Natural killer cell (primary cell): ENCODE measurements at regions of chr1 and their contacts with region 1.

Region 1: DNA sequence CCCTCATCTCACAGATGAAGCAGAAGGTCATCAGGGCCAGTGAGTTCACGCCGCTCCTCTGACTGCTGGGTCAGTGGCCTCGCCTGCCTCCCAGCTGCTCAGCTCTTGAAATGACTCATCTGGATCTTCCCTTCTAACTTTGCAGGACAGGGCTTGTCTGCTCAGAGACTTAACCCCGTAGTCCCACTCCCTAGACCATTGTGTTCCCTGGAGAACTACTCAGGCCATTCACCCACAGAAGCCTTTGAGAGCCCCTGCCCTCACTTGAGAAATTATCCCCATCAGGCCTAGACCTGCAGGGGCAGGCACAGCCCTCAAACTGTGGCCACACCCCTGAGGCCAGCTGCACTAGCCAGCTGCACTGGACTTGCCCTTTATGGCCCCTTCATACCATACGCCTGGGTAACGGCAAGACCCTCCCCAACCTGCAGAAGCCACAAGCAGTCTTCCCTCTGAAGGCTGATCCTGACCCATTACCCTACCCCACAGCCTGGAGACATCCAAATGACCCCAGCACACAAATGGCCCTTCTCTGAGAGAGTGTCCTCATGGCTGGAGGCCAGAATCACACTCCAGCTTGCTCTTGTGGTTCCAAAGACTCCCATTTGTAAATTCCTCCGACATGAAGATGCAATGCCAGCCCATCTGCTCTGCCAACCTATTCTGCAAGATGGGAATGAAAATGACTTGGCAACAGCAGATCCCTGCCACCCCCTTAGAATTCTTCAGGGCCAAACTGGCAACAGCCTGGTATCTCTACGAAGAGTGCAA is 33.2 kb downstream of the RCSD1 start:
- DNase-seq: no peak
- ATAC-seq: no peak
- H3K4me3 ChIP-seq: no peak overlapping the region
- H3K4me3 Mint-ChIP-seq: no peak overlapping the region
- H3K27ac ChIP-seq: no peak overlapping the region
- H3K27ac Mint-ChIP-seq: peak overlapping the region; percentile 47 to 97
- H3K4me1 ChIP-seq: peaks cover 65% of the 10 kb centered on the region
- H3K4me1 Mint-ChIP-seq: peaks cover 92 to 94% of the 10 kb centered on the region in 2 donors
- H3K27me3 ChIP-seq: no peaks in the 10 kb centered on the region
- H3K27me3 Mint-ChIP-seq: no peaks in the 10 kb centered on the region
- CTCF ChIP-seq: no peak

Region 2: DNA sequence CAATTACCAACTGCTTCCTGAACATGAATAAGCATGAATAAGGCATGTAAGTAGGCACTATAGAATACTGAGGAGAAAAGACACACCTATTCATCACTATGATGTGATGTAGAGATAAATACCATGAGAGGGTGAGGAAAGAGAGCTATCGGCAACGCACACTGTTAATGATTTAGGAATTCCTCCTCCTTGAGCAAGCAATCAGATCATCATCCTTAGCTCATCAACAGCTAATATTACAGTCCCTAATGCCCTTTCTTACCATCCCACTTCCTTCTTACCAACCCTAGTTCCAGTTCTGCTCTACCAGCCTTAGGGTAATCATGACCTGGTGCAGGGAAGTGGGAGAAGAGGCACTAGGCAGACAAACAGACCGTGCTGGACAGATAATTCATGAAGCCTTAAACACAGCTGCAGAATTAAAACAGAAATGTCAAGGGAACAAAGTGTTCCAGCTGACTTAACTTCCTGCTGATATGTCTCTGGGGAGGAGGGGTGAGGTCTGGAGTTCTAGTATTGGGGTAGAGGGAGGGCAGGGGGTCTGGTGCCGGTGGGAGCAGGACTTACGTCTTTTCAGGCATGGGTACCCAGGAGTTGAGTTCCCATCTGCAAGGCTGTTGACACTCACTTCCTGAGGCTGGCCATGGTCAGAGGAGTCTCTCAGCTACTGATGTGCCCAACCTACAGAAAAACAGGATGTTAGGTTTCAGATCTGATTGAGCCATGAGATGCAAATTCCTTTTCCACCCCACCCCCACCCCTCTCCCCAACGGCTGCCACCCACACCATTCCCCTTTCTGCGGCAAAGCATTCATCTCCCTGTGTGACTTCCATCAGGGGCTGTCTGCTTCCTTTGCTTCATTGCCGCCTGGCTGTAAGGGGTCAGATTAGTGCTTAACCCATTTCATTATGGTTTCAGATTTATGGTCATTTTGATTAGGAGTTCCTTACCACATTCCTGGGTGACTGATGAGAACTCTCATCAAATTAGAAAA is 45.7 kb before region 1 on chr1:
- intact Hi-C with region 1: no loop called
- DNase-seq: peak in 1 of 2 donors; percentile 46
- ATAC-seq: peak; percentile 67 to 83 (median 78)
- H3K4me3 ChIP-seq: peak overlapping the region; percentile 32
- H3K4me3 Mint-ChIP-seq: peak overlapping the region; percentile 47
- H3K27ac ChIP-seq: peak overlapping the region; percentile 76
- H3K27ac Mint-ChIP-seq: peak overlapping the region; percentile 46 to 68
- H3K4me1 ChIP-seq: peaks cover 30% of the 10 kb centered on the region
- H3K4me1 Mint-ChIP-seq: peaks cover 29 to 37% of the 10 kb centered on the region in 2 donors
- H3K27me3 ChIP-seq: no peaks in the 10 kb centered on the region
- H3K27me3 Mint-ChIP-seq: no peaks in the 10 kb centered on the region
- CTCF ChIP-seq: no peak

Region 3: DNA sequence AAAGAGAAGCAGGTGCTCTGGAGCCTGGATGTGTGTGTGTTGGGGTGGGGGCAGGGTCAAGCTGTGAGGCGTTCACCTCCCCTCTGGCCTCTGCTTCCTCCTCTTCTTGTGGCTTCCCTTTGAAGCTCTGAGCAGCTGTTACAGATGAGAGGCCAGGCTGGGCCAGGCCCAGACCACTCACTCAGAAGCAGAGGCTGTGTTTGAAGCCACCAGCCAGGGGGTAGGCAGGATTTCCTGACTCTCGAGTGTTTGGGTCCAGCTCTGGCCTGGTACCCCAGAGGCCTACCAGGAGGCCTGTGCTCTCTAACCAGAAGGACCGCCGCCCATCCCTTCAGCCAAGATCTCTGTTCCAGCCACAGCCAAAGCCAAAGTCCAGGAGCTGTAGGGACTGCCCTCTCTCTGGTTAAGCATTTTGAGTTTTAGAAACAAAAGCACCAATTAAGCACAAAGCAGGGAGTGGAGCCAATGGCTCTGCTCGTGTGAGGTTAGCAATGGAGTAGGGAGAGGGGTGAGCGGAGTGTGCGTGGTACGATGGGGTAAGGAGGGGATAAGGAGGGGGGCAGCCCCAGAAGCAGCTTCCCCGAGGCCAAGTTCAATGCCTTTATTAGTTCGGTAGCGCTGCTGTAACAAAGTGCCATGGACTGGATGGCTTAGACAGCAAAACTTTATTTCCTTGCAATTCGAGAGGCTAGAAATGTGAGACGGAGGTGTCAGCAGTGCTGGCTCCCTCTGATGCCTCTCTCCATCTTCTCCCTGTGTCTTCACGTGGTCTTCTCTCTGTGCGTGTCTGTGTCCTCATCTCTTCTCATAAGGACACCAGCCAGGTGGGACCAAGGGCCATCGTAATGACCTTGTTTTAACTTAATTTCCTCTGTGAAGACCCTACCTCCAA is 12.7 kb before region 1 on chr1:
- intact Hi-C with region 1: loop called (anchors 2 kb)
- DNase-seq: no peak
- ATAC-seq: peak; percentile 44 to 61 (median 58)
- H3K4me3 ChIP-seq: no peak overlapping the region
- H3K4me3 Mint-ChIP-seq: peak overlapping the region; percentile 89
- H3K27ac ChIP-seq: peak overlapping the region; percentile 68
- H3K27ac Mint-ChIP-seq: peak overlapping the region; percentile 97
- H3K4me1 ChIP-seq: peaks cover 80% of the 10 kb centered on the region
- H3K4me1 Mint-ChIP-seq: peaks cover 73 to 82% of the 10 kb centered on the region in 2 donors
- H3K27me3 ChIP-seq: no peaks in the 10 kb centered on the region
- H3K27me3 Mint-ChIP-seq: no peaks in the 10 kb centered on the region
- CTCF ChIP-seq: no peak

Region 4: DNA sequence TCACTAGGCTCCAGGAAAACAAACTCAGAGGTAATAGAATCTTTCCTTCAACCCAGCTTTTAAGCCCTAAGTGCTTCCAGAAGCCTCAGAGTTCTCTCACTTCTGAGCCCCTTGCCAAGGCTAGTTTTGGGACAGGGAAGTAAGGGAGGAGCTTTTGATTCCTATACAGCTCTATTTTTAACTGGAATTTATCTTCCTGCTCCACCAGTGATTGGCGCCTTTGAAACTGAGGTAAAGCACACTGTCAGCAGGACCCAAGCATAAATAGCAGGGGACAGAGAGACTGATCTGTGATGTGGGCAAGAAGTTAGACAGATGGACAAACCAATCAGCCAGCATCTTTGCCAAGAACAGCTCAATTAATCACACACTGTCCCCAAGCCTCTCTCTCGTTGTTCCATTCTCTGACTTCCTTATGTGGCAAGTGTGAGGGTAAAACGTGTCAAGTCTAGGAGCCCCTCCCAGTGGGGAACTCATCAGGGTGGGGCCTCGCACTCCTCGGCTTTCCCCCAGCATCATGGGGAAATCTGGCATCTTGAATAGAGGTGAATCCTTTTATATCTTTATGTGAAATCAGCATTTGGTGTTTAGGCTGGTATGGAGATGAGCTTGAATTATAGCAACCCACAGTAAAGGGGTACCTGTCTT is 18.4 kb after region 1 on chr1:
- intact Hi-C with region 1: loop called (anchors 2 kb)
- DNase-seq: no peak
- ATAC-seq: peak; percentile 41 to 76 (median 70)
- H3K4me3 ChIP-seq: no peak overlapping the region
- H3K4me3 Mint-ChIP-seq: no peak overlapping the region
- H3K27ac ChIP-seq: peak overlapping the region; percentile 31
- H3K27ac Mint-ChIP-seq: no peak overlapping the region
- H3K4me1 ChIP-seq: peaks cover 42% of the 10 kb centered on the region
- H3K4me1 Mint-ChIP-seq: peaks cover 13 to 14% of the 10 kb centered on the region in 2 donors
- H3K27me3 ChIP-seq: no peaks in the 10 kb centered on the region
- H3K27me3 Mint-ChIP-seq: no peaks in the 10 kb centered on the region
- CTCF ChIP-seq: no peak